Upper lobe of right lung (tissue), 1 donor: ENCODE measurements at regions of chr11 and their contacts with region 1.

Region 1: DNA sequence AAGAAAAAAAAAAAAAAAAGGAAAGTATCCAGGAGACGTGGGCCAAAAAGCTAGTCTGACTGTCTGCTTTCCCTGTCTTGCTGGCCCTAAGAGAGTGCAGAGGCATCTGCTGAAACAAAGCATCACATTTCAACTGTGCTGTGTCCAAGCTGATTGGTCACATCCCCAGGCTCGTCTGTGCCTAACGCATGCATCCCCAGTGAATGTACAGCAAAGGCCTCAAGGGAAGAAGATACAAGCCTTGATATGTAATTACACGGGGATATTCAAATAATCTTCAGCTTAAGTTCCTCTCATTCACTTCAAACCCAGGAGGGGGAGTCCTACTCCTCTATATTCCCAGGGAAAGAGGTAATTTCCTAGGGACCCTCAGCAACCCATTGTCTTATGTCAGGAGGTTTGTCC is 5.4 kb upstream of the SORL1 start:
- DNase-seq: no peak
- ATAC-seq: no peak
- H3K4me3 ChIP-seq: no peak overlapping the region
- H3K27ac ChIP-seq: no peak overlapping the region
- H3K4me1 ChIP-seq: peaks cover 12% of the 10 kb centered on the region
- H3K27me3 ChIP-seq: no peaks in the 10 kb centered on the region
- CTCF ChIP-seq: peak; percentile 6

Region 2: GRCh38 chr11:121321614-121322243 is 125.0 kb before region 1 on chr11:
- intact Hi-C with region 1: loop called (anchors 5 kb)
- DNase-seq: no peak
- ATAC-seq: peak; percentile 85
- H3K4me3 ChIP-seq: no peak overlapping the region
- H3K27ac ChIP-seq: no peak overlapping the region
- H3K4me1 ChIP-seq: no peaks in the 10 kb centered on the region
- H3K27me3 ChIP-seq: no peaks in the 10 kb centered on the region
- CTCF ChIP-seq: peak; percentile 43

Region 3: GRCh38 chr11:121494355-121495099 is 47.8 kb after region 1 on chr11:
- intact Hi-C with region 1: no loop called
- DNase-seq: no peak
- ATAC-seq: peak; percentile 55
- H3K4me3 ChIP-seq: no peak overlapping the region
- H3K27ac ChIP-seq: no peak overlapping the region
- H3K4me1 ChIP-seq: peaks cover 10% of the 10 kb centered on the region
- H3K27me3 ChIP-seq: no peaks in the 10 kb centered on the region
- CTCF ChIP-seq: no peak

Region 4: GRCh38 chr11:121762820-121763219 is 316.1 kb after region 1 on chr11:
- intact Hi-C with region 1: no loop called
- DNase-seq: no peak
- ATAC-seq: no peak
- H3K4me3 ChIP-seq: no peak overlapping the region
- H3K27ac ChIP-seq: no peak overlapping the region
- H3K4me1 ChIP-seq: no peaks in the 10 kb centered on the region
- H3K27me3 ChIP-seq: no peaks in the 10 kb centered on the region
- CTCF ChIP-seq: no peak